AG04450 (cell line): ENCODE measurements at regions of chr18 and their contacts with region 1.

Region 1: DNA sequence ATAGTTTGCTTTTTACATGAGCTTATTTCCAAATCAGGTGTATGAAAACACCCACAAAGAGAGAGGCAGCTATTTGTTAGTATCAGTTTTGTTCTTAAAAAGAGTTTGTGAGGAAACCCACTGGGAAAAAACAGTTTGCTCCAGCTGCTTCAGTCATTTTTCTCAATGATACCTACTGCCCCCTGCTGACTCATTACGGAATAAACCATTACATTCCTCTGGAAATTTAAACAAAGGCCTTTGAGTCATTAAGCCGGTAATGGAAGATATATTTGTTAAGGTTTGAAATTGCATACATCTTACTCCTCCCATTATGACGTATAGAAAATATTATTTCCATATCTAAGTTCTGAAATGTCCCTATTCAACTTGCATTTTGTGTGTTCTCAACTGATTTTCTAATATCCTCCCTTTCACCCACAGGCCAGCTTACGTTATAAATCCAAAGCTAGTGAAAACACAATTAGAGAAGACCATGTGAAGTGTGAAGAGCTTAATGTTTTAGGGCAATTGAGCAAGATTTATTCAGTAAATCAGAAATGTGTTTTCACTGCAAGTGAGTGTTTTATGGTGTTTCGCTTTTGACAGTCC is 761.6 kb downstream of the DSC3 start:
- DNase-seq: peak; percentile 1
- H3K4me3 ChIP-seq: no peak overlapping the region
- H3K27ac ChIP-seq: no peak overlapping the region
- H3K27me3 ChIP-seq: no peaks in the 10 kb centered on the region
- CTCF ChIP-seq: peak; percentile 69

Region 2: DNA sequence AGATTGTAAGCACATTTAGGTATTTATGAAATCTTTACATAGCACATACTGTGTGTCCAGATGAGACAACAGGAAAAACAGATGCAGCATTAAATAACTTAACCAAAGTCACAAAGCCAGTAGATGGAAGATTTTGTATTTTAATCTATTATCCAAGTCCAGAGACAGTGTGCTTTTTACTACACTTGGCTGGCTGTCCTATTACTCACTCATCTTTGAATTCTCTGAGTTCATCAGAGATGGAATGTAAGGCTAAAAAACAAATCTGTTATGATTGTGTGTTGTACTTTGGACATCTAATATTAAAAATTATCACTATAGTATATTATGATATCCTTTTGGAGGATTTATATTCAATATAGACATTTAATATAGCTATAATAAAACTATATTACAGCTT is 427.8 kb before region 1 on chr18:
- CTCF ChIA-PET with region 1: no interaction called
- POLR2A ChIA-PET with region 1: no interaction called
- DNase-seq: no peak
- H3K4me3 ChIP-seq: no peak overlapping the region
- H3K27ac ChIP-seq: no peak overlapping the region
- H3K27me3 ChIP-seq: no peaks in the 10 kb centered on the region
- CTCF ChIP-seq: no peak

Region 3: DNA sequence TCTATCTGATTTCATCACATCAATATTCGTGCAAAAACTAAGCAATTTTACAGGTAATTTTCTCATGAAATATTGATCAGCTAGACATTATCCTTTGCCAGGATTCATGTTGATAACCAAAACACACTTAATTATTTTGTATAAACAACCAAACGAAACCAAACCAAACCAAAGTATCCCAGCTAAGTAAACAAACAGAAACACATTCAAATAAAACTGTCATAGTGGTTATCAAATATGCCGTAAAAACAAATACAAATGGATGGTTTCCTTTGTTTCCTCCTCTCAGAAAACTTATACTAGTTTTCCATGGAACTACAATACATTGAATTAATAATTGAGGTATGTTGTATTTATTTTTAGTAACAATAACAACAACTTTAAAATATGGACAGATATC is 15.8 kb before region 1 on chr18:
- CTCF ChIA-PET with region 1: interaction called, 25 read pairs
- POLR2A ChIA-PET with region 1: no interaction called
- DNase-seq: no peak
- H3K4me3 ChIP-seq: no peak overlapping the region
- H3K27ac ChIP-seq: no peak overlapping the region
- H3K27me3 ChIP-seq: no peaks in the 10 kb centered on the region
- CTCF ChIP-seq: no peak